CD4-positive, alpha-beta memory T cell (primary cell): ENCODE measurements at regions of chr5 and their contacts with region 1.

Region 1: DNA sequence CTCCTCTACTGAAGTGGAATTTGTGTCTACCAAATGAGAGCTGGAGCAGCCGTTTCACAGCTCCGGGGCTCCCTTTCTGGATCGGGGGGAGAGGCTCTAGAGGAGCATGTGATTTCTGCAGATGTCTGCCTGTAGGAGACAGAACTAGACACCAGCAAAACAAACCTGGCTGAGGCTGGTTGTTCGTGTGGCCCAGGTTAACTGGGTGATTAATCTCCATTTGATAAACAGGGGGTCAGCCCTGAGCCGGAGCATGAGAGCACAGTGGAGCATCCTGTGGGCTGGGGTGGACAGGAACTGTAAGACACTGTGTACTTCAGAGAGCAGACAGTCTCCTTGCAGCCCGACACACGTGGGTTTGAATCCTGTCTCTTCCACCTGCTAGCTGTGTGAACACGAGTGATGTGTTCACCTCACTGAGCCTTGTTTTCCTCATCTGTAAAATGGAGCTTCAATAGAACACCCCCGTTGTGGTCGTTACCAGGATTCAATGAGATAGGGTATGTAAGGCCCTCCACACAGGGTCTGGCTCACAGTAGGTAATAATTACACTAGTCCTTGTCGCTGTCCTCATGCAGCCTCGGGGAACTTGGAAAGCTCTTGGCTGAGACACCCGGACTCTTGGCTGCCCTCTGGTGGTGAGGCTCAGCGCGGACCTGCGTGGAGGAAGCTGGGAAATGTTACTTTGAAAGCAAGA is 12.9 kb downstream of the CXCL14 start:
- DNase-seq: peak; percentile 26 to 49 (median 43)
- H3K4me3 ChIP-seq: no peak overlapping the region
- H3K4me3 Mint-ChIP-seq: peak overlapping the region in 1 of 8 donors; percentile 37
- H3K27ac ChIP-seq: no peak overlapping the region
- H3K27ac Mint-ChIP-seq: no peak overlapping the region
- H3K4me1 ChIP-seq: no peaks in the 10 kb centered on the region
- H3K4me1 Mint-ChIP-seq: peaks cover 5 to 12% (median 6%) of the 10 kb centered on the region in 4 donors
- H3K27me3 ChIP-seq: no peaks in the 10 kb centered on the region
- H3K27me3 Mint-ChIP-seq: peaks cover 4 to 10% of the 10 kb centered on the region in 2 donors

Region 2: GRCh38 chr5:135576075-135576599 is 10.3 kb after region 1 on chr5:
- CTCF ChIA-PET with region 1: interaction called, 21 read pairs
- POLR2A ChIA-PET with region 1: interaction called, 3 read pairs
- intact Hi-C with region 1: no loop called
- DNase-seq: no peak
- H3K4me3 ChIP-seq: no peak overlapping the region
- H3K4me3 Mint-ChIP-seq: no peak overlapping the region
- H3K27ac ChIP-seq: no peak overlapping the region
- H3K27ac Mint-ChIP-seq: no peak overlapping the region
- H3K4me1 ChIP-seq: no peaks in the 10 kb centered on the region
- H3K4me1 Mint-ChIP-seq: peaks cover 0 to 4% (median 0%) of the 10 kb centered on the region in 4 donors
- H3K27me3 ChIP-seq: no peaks in the 10 kb centered on the region
- H3K27me3 Mint-ChIP-seq: peaks cover 24 to 25% of the 10 kb centered on the region in 2 donors

Region 3: DNA sequence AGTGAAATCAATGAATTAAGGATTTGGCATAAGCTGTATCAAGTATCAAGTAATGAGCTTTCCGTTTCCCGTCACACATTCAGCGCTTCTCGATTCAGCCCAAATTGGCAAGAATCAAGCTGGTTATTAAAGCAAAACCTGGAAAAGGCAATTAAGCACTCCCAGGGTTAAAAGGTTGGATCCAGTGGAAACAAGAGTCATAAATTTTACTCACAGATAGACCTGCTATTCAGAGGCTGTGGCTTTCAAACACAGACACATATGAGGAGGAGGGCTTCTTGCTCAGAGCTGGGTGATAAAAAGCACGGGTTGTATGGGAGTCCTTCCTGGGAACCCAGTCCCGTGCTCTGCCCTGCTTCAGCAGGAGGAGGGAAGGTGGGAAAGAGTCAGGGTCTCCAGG is 125.2 kb after region 1 on chr5:
- CTCF ChIA-PET with region 1: no interaction called
- POLR2A ChIA-PET with region 1: no interaction called
- intact Hi-C with region 1: no loop called
- DNase-seq: no peak
- H3K4me3 ChIP-seq: no peak overlapping the region
- H3K4me3 Mint-ChIP-seq: no peak overlapping the region
- H3K27ac ChIP-seq: no peak overlapping the region
- H3K27ac Mint-ChIP-seq: no peak overlapping the region
- H3K4me1 ChIP-seq: no peaks in the 10 kb centered on the region
- H3K4me1 Mint-ChIP-seq: no peaks in the 10 kb centered on the region
- H3K27me3 ChIP-seq: no peaks in the 10 kb centered on the region
- H3K27me3 Mint-ChIP-seq: peaks cover 12 to 15% of the 10 kb centered on the region in 2 donors